MCF 10A (cell line): ENCODE measurements at regions of chr9 and their contacts with region 1.

Region 1: DNA sequence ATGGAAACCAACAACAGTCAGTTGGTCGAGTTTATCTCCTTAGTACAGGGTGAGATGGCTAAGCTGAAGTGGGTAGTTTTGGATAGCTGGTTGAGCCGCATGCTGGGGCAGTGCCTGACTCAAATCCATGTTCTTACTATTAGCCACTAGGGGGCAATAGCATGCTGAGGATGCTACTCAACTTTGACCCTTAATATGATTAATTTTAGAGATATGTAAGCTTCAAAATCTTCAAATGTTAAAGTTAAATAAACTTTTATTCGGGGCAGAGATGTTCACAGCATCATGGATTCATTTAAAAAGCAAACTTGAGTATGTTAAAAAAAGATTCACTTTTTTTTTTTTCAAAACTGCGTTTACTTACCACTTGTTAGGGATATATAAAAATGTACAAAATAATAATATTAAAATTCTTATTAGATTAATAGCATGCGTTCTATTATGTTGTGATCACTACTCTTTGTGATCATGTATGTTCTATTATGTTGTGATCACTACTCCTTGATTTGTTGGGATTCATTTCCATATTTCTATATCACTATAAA is 57.0 kb downstream of the C9orf153 start:
- DNase-seq: peak; percentile 64
- H3K4me3 Mint-ChIP-seq: no peak overlapping the region
- H3K27ac Mint-ChIP-seq: no peak overlapping the region
- H3K4me1 Mint-ChIP-seq: peaks cover 6% of the 10 kb centered on the region
- H3K27me3 Mint-ChIP-seq: no peaks in the 10 kb centered on the region
- CTCF ChIP-seq: peak; percentile 65

Region 2: GRCh38 chr9:86098824-86099700 is 103.3 kb before region 1 on chr9 and contains the start of gene GOLM1:
- CTCF ChIA-PET with region 1: interaction called, 6 read pairs
- POLR2A ChIA-PET with region 1: interaction called, 12 read pairs
- intact Hi-C with region 1: no loop called
- DNase-seq: peak; percentile 56
- H3K4me3 Mint-ChIP-seq: peak within 1 kb of the TSS; percentile 82
- H3K27ac Mint-ChIP-seq: peak within 1 kb of the TSS; percentile 77
- H3K4me1 Mint-ChIP-seq: peaks cover 14% of the 10 kb centered on the region
- H3K27me3 Mint-ChIP-seq: no peaks in the 10 kb centered on the region
- CTCF ChIP-seq: no peak
- total RNA-seq, gene GOLM1: 32.7 and 33.9 TPM in 2 replicates

Region 3: GRCh38 chr9:86187121-86187520 is 15.3 kb before region 1 on chr9:
- CTCF ChIA-PET with region 1: interaction called, 23 read pairs
- POLR2A ChIA-PET with region 1: interaction called, 4 read pairs
- intact Hi-C with region 1: no loop called
- DNase-seq: peak; percentile 36
- H3K4me3 Mint-ChIP-seq: no peak overlapping the region
- H3K27ac Mint-ChIP-seq: no peak overlapping the region
- H3K4me1 Mint-ChIP-seq: peaks cover 16% of the 10 kb centered on the region
- H3K27me3 Mint-ChIP-seq: no peaks in the 10 kb centered on the region
- CTCF ChIP-seq: no peak

Region 4: DNA sequence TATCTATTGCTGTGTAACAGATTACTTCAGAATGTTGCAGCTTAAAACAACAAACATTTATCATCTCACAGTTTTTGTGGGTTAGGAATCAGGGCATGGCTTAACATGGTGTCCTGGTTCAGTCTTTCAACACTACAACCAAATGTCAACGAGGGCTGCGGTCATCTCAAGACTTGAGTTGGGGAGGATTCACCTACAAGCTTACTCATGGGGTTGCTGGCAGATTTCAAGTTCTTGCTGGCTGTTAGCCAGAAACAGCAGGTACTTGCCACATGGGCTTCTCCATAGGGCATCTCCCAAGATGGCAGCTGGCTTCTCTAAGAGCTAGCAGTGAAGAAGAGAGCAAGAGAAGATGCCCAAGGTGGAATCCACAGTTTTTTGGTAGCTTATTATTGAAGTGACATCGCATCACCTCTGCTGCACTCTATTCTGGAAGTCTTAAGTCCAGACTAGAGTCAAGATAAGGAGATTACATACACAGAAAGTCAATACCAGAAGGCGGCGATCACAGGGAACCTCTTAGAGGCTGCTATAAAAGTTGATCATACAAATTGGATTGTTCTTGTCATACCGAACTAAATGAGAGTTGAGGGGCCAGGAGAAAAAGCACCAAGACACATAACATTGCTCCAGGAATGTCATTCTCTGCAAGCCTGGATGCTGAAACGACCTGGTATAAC is 14.8 kb after region 1 on chr9:
- CTCF ChIA-PET with region 1: interaction called, 25 read pairs
- POLR2A ChIA-PET with region 1: interaction called, 4 read pairs
- intact Hi-C with region 1: no loop called
- DNase-seq: peak; percentile 61
- H3K4me3 Mint-ChIP-seq: no peak overlapping the region
- H3K27ac Mint-ChIP-seq: peak overlapping the region; percentile 73
- H3K4me1 Mint-ChIP-seq: no peaks in the 10 kb centered on the region
- H3K27me3 Mint-ChIP-seq: no peaks in the 10 kb centered on the region
- CTCF ChIP-seq: no peak

Region 5: DNA sequence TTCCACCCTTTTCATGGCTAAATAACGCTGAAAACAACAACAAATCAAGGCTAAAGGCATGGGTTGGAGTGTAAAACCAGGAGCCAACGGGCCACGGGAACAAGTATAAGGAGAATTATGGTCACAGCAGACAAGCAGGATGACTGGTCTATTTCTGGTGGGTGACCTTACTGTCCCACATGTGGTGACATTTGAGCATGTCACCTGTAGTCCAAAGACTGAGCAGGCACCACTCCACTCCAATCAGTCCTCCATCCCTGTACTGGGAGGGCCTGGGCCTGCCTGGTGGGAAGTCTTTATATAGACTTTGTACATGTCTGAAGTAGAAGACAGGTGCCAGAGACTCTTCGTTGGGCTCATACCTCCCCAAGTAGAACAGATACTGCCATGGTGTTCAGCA is 20.3 kb after region 1 on chr9:
- CTCF ChIA-PET with region 1: interaction called, 17 read pairs
- POLR2A ChIA-PET with region 1: no interaction called
- intact Hi-C with region 1: no loop called
- DNase-seq: no peak
- H3K4me3 Mint-ChIP-seq: no peak overlapping the region
- H3K27ac Mint-ChIP-seq: no peak overlapping the region
- H3K4me1 Mint-ChIP-seq: no peaks in the 10 kb centered on the region
- H3K27me3 Mint-ChIP-seq: no peaks in the 10 kb centered on the region
- CTCF ChIP-seq: no peak

Region 6: DNA sequence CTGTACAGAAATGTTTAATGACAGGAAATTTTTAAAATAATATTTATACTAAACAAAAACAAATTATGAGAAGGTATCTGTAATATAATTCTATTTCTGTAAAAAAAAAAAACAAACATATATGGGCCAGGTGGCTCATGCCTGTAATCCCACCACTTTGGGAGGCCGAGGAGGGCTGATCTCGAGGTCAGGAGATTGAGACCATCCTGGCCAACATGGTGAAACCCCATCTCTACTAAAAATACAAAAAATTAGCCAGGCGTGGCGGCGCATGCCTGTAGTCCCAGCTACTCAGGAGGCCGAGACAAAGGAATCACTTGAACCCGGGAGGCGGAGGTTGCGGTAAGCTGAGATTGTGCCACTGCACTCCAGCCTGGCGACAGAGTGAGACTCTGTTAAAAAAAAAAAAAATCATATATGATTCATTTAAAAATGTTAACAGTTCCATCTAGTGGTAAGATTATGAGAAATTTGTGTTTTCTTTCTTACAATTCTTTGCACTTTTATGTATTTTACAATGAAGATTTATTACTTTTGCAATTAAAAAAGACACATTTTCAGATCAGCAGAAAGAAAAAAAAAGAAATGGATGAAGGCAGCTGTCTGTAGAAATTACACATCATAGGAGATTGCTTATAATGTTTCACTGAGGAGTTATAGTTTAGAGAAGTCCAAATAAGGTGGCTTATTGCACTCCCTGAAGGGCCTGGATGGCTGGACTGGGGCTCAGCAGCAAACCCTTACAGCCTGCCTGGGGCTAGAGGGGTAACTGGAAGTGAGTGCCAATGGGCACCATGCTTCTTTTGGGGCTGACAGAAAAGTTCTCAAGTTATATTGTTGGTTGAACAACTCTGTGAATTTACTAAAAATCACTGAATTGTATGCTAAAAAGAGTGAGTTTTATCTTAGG is 36.7 kb after region 1 on chr9:
- CTCF ChIA-PET with region 1: interaction called, 56 read pairs
- POLR2A ChIA-PET with region 1: no interaction called
- intact Hi-C with region 1: loop called (anchors 2 kb)
- DNase-seq: no peak
- H3K4me3 Mint-ChIP-seq: no peak overlapping the region
- H3K27ac Mint-ChIP-seq: no peak overlapping the region
- H3K4me1 Mint-ChIP-seq: no peaks in the 10 kb centered on the region
- H3K27me3 Mint-ChIP-seq: peaks cover 12% of the 10 kb centered on the region
- CTCF ChIP-seq: peak; percentile 19

Region 7: GRCh38 chr9:88056876-88057275 is 1854.5 kb after region 1 on chr9:
- CTCF ChIA-PET with region 1: no interaction called
- POLR2A ChIA-PET with region 1: no interaction called
- intact Hi-C with region 1: no loop called
- DNase-seq: no peak
- H3K4me3 Mint-ChIP-seq: no peak overlapping the region
- H3K27ac Mint-ChIP-seq: peak overlapping the region; percentile 13
- H3K4me1 Mint-ChIP-seq: peaks cover 6% of the 10 kb centered on the region
- H3K27me3 Mint-ChIP-seq: no peaks in the 10 kb centered on the region
- CTCF ChIP-seq: no peak